CD8-positive, alpha-beta memory T cell (primary cell): ENCODE measurements at regions of chr15 and their contacts with region 1.

Region 1: DNA sequence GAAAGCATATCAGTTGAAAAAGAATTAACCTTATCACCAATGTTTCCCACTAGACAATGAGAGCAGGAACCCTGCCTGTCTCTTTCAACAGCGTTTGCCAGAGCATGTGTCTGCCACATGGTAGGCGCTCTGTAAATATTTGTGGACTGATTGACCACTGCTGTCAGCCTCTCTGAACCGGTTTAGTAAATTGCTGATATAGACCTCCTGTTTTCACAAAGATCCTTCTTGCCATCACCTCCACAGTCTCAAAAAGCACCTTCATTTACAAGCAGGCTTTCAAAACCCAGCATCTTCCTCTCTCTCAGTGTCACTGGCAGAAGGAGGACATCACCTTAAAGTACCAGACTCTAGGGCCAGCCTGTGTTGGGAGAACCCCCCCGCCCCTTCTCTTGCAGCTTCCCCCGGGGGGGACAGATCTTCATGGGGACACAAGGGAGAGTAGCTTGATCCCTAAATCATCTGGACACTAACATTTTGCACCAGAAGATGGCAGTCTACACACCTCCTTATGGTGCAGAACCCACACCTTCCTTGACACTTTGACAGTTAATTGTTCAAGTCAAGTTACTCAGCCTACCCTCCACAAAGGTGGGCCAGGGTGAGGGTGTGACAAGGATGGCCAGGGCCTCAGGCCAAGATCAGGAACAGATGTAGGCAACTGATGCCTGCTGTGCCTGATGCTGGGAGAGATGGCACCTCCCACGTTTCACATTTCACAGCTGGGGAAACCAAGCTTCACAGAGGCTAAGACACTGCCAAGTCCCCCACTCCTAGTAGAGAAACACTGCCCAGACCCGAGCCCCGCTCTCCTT is 37.8 kb upstream of the USP3 start:
- DNase-seq: peak in 4 of 5 donors; percentile 18 to 78 (median 66)
- H3K4me3 ChIP-seq: no peak overlapping the region
- H3K4me3 Mint-ChIP-seq: no peak overlapping the region
- H3K27ac ChIP-seq: no peak overlapping the region
- H3K27ac Mint-ChIP-seq: peak overlapping the region in 5 of 8 donors; percentile 24 to 77 (median 70)
- H3K4me1 ChIP-seq: peaks cover 10% of the 10 kb centered on the region
- H3K4me1 Mint-ChIP-seq: peaks cover 8 to 26% (median 17%) of the 10 kb centered on the region in 3 donors
- H3K27me3 ChIP-seq: no peaks in the 10 kb centered on the region
- H3K27me3 Mint-ChIP-seq: peaks cover 4 to 5% of the 10 kb centered on the region in 2 donors

Region 2: DNA sequence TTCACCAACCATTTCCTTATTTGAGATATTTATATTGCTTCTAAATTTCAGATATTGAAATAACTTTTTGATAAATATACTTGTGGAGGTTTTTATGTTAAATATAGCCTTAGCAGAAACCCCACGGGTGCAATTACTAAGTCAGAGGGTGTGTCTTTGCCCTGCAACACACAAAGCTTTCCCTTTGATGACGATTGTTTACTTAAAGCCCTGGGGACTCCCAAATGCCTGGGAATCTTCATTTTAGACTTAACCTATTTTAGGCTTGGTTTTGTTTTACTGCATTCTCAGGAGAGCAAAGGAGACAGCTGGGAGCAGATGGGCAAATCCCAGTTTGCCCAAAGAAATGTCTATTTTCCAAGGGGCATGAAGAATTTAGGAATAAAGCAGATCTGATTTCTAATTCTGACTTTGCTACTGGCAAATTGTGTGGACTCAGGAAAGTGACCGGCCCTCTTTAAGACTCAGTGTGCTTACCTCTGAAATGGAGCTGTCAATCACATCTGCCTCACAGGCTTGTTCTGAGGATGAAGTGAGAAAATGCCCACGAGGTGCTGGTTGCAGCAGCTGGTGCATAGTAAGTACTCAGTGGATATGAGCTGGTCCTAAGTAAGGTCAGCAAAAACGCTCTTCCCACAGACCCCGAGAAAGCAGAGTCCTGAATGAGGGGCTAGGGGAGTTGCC is 35.7 kb before region 1 on chr15:
- CTCF ChIA-PET with region 1: no interaction called
- POLR2A ChIA-PET with region 1: no interaction called
- DNase-seq: no peak
- H3K4me3 ChIP-seq: no peak overlapping the region
- H3K4me3 Mint-ChIP-seq: no peak overlapping the region
- H3K27ac ChIP-seq: no peak overlapping the region
- H3K27ac Mint-ChIP-seq: no peak overlapping the region
- H3K4me1 ChIP-seq: no peaks in the 10 kb centered on the region
- H3K4me1 Mint-ChIP-seq: no peaks in the 10 kb centered on the region
- H3K27me3 ChIP-seq: no peaks in the 10 kb centered on the region
- H3K27me3 Mint-ChIP-seq: peaks cover 8 to 9% of the 10 kb centered on the region in 2 donors

Region 3: DNA sequence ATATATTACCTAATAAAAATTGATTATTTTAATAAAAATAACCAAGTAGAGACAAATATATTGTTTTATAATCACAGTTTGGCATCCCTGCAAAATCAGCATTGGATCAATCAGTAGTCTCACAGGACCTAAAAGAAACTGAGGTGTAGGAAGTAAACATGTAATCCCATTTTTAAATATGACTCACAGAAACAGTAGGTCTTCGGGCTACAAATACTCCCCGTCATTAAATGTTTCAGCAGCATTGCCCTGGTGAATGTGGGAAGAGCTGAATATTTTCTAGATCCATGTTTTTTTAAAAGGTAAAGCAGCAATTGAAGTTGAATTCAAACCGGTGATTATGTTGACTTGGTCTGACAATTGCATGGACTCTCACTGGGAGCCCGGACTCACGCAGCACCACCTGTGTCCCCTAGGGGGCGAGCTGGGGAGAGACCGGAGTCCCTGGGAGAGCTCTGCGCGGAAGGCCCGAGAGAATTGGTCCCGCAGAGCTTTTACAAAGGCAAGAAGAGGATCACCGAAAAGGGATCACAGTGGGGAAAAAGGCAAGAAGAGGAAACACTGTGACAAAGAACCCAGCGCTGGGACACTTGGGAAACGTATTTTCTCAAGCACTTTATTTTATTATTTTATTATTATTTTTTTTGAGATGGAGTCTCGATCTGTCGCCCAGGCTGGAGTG is 20.6 kb after region 1 on chr15:
- CTCF ChIA-PET with region 1: interaction called, 31 read pairs
- POLR2A ChIA-PET with region 1: interaction called, 6 read pairs
- DNase-seq: peak; percentile 78 to 91 (median 83)
- H3K4me3 ChIP-seq: no peak overlapping the region
- H3K4me3 Mint-ChIP-seq: peak overlapping the region in 6 of 7 donors; percentile 49 to 79 (median 67)
- H3K27ac ChIP-seq: no peak overlapping the region
- H3K27ac Mint-ChIP-seq: peak overlapping the region in 6 of 8 donors; percentile 78 to 92 (median 89)
- H3K4me1 ChIP-seq: peaks cover 60% of the 10 kb centered on the region
- H3K4me1 Mint-ChIP-seq: peaks cover 41 to 66% (median 66%) of the 10 kb centered on the region in 3 donors
- H3K27me3 ChIP-seq: no peaks in the 10 kb centered on the region
- H3K27me3 Mint-ChIP-seq: no peaks in the 10 kb centered on the region

Region 4: DNA sequence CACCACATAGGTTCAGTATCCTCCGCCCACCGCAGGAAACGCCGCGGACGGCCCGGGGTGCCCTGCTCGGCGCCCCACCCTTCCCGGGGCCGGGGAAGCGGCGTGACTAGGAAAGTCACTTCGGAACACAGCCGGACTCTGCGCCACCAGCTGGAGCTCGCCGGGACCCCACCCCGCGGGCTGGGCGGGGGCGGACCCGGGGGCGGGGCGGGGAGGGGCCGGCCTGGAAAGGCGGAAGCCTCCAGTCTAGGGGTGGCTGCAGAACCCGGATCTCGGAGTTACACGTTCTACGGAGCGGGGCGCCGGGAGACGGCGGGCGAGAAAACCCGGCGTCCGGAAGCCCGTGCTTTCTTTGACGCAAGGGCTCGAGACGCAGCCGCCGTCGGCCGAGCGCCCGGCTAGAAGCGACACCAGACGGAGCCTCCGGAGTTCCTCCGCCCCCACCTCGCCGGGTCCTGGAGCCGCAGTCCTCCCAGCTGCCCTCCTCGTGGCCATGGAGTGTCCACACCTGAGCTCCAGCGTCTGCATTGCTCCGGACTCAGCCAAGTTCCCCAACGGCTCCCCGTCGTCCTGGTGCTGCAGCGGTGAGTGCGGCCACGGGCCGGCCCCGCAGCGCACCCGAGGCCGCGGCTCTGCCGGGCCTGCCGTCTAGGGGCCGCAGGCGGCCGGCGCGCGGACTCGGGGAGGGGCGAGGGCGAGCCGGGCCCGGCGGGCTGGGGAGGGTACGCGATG is 37.8 kb after region 1 on chr15 and contains the start of gene USP3:
- CTCF ChIA-PET with region 1: interaction called, 41 read pairs
- POLR2A ChIA-PET with region 1: interaction called, 10 read pairs
- DNase-seq: peak; percentile 86 to 95 (median 92)
- H3K4me3 ChIP-seq: peak within 1 kb of the TSS; percentile 90
- H3K4me3 Mint-ChIP-seq: peak within 1 kb of the TSS; percentile 94 to 99 (median 98)
- H3K27ac ChIP-seq: peak within 1 kb of the TSS; percentile 96
- H3K27ac Mint-ChIP-seq: peak within 1 kb of the TSS; percentile 96 to 100 (median 100)
- H3K4me1 ChIP-seq: peaks cover 80% of the 10 kb centered on the region
- H3K4me1 Mint-ChIP-seq: peaks cover 78 to 81% (median 78%) of the 10 kb centered on the region in 3 donors
- H3K27me3 ChIP-seq: no peaks in the 10 kb centered on the region
- H3K27me3 Mint-ChIP-seq: no peaks in the 10 kb centered on the region
- total RNA-seq, gene USP3: 36.6 to 38.0 TPM

Region 5: GRCh38 chr15:63600616-63601025 is 134.0 kb after region 1 on chr15:
- CTCF ChIA-PET with region 1: interaction called, 51 read pairs
- POLR2A ChIA-PET with region 1: no interaction called
- DNase-seq: peak; percentile 84 to 94 (median 93)
- H3K4me3 ChIP-seq: peak overlapping the region; percentile 86
- H3K4me3 Mint-ChIP-seq: peak overlapping the region; percentile 88 to 100 (median 95)
- H3K27ac ChIP-seq: peak overlapping the region; percentile 84
- H3K27ac Mint-ChIP-seq: peak overlapping the region; percentile 91 to 99 (median 96)
- H3K4me1 ChIP-seq: peaks cover 32% of the 10 kb centered on the region
- H3K4me1 Mint-ChIP-seq: peaks cover 46 to 70% (median 48%) of the 10 kb centered on the region in 3 donors
- H3K27me3 ChIP-seq: no peaks in the 10 kb centered on the region
- H3K27me3 Mint-ChIP-seq: no peaks in the 10 kb centered on the region